ENCODE measurements at regions of chr1 and their contacts with region 1.

Region 1: GRCh38 chr1:33367485-33368405 is 46.8 kb upstream of the A3GALT2 start:
- DNase-seq: peak; percentile 82 to 91
- ATAC-seq: peak; percentile 92 to 100 (median 98)
- H3K4me3 ChIP-seq: no peak overlapping the region
- H3K4me3 Mint-ChIP-seq: no peak overlapping the region
- H3K27ac ChIP-seq: no peak overlapping the region
- H3K27ac Mint-ChIP-seq: no peak overlapping the region
- H3K4me1 ChIP-seq: peaks cover 6% of the 10 kb centered on the region
- H3K4me1 Mint-ChIP-seq: peaks cover 0 to 3% of the 10 kb centered on the region in 2 donors
- H3K27me3 ChIP-seq: no peaks in the 10 kb centered on the region
- H3K27me3 Mint-ChIP-seq: peaks cover 0 to 4% of the 10 kb centered on the region in 2 donors
- CTCF ChIP-seq: peak; percentile 95

Region 2: DNA sequence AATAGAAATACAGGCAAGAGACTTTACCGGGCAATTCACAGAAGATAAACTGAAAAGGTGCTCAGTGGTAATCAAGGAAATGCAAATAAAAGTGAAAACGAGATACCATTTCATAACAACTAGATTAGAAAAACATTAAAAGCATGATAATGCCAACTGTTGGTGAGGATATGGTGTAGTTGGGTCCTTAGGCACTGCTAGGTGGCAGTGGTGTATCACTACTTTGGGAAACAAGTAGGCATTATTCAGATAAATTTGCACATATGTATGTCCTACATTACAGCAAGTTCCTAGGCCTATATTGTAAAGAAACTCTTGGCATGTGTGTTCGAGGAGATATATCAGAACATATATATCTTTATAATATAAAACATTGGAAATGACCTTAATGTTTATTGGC is 255.8 kb before region 1 on chr1:
- intact Hi-C with region 1: loop called (anchors 5 kb)
- DNase-seq: peak in 1 of 2 donors; percentile 53
- ATAC-seq: peak in 1 of 3 donors; percentile 37
- H3K4me3 ChIP-seq: no peak overlapping the region
- H3K4me3 Mint-ChIP-seq: no peak overlapping the region
- H3K27ac ChIP-seq: no peak overlapping the region
- H3K27ac Mint-ChIP-seq: no peak overlapping the region
- H3K4me1 ChIP-seq: no peaks in the 10 kb centered on the region
- H3K4me1 Mint-ChIP-seq: no peaks in the 10 kb centered on the region
- H3K27me3 ChIP-seq: no peaks in the 10 kb centered on the region
- H3K27me3 Mint-ChIP-seq: no peaks in the 10 kb centered on the region
- CTCF ChIP-seq: no peak

Region 3: DNA sequence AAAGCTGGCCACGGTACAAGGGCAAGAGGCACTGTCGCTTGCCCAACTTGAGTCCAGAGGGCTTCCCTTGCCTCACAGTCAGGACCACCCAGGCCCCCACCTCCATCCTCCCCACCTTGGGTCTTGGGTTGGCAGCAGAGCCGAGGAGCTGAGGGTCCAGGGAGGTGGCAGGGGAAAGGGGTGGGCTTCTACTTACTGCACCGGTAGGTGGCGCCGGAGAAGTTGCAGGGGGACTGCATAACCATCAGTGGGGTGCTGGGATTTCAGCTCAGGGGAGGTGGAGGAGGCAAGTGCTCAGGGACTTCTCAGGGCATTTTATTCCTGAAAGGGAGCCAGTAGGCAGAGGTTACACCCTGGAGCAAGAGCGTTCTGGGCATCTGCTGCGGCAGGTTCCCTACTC is 229.9 kb before region 1 on chr1:
- intact Hi-C with region 1: loop called (anchors 10 kb)
- DNase-seq: peak; percentile 23 to 59
- ATAC-seq: peak in 2 of 3 donors; percentile 52 to 53
- H3K4me3 ChIP-seq: no peak overlapping the region
- H3K4me3 Mint-ChIP-seq: no peak overlapping the region
- H3K27ac ChIP-seq: no peak overlapping the region
- H3K27ac Mint-ChIP-seq: no peak overlapping the region
- H3K4me1 ChIP-seq: no peaks in the 10 kb centered on the region
- H3K4me1 Mint-ChIP-seq: peaks cover 6 to 17% of the 10 kb centered on the region in 2 donors
- H3K27me3 ChIP-seq: no peaks in the 10 kb centered on the region
- H3K27me3 Mint-ChIP-seq: peaks cover 15 to 27% of the 10 kb centered on the region in 2 donors
- CTCF ChIP-seq: peak; percentile 43

Region 4: GRCh38 chr1:33295450-33296081 is 72.2 kb before region 1 on chr1:
- intact Hi-C with region 1: loop called (anchors 1 kb)
- DNase-seq: peak; percentile 83 to 92
- ATAC-seq: peak; percentile 89 to 96 (median 92)
- H3K4me3 ChIP-seq: no peak overlapping the region
- H3K4me3 Mint-ChIP-seq: no peak overlapping the region
- H3K27ac ChIP-seq: no peak overlapping the region
- H3K27ac Mint-ChIP-seq: peak overlapping the region in 1 of 2 donors; percentile 53
- H3K4me1 ChIP-seq: peaks cover 8% of the 10 kb centered on the region
- H3K4me1 Mint-ChIP-seq: peaks cover 25 to 38% of the 10 kb centered on the region in 2 donors
- H3K27me3 ChIP-seq: no peaks in the 10 kb centered on the region
- H3K27me3 Mint-ChIP-seq: no peaks in the 10 kb centered on the region
- CTCF ChIP-seq: peak; percentile 97

Measured in natural killer cell (primary cell).